HCT116 (cell line): ENCODE measurements at regions of chr9 and their contacts with region 1.

Region 1: DNA sequence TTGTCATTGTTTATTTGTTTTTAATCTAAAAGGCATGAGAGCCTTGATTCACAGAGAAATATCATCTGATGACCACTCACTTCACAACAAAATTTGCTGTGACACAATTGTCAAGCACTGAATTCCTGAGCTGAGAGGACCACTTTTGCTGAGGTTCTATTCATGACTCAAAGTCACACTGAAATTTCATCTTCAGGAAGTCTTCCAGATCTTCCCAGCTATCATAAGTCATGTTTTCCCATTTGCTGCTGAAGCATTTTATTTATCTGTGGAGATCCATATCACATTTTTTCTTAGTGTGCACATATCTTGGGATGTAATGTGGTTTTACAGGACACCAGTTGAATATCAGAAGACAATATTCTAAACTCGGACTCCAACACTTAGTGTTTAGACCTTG is 255.1 kb upstream of the TRIM32 start:
- DNase-seq: no peak
- ATAC-seq: no peak
- H3K4me3 ChIP-seq: no peak overlapping the region
- H3K27ac ChIP-seq: no peak overlapping the region
- H3K4me1 ChIP-seq: no peaks in the 10 kb centered on the region
- H3K27me3 ChIP-seq: no peaks in the 10 kb centered on the region
- CTCF ChIP-seq: no peak
- POLR2A ChIP-seq: no peak
- RAD21 ChIP-seq: no peak

Region 2: GRCh38 chr9:115668506-115668905 is 763.5 kb before region 1 on chr9:
- CTCF ChIA-PET with region 1: no interaction called
- POLR2A ChIA-PET with region 1: no interaction called
- RAD21 ChIA-PET with region 1: no interaction called
- intact Hi-C with region 1: no loop called
- DNase-seq: no peak
- ATAC-seq: no peak
- H3K4me3 ChIP-seq: no peak overlapping the region
- H3K27ac ChIP-seq: no peak overlapping the region
- H3K4me1 ChIP-seq: no peaks in the 10 kb centered on the region; a peak in 1 of 4 replicates
- H3K27me3 ChIP-seq: peaks cover 39% of the 10 kb centered on the region
- CTCF ChIP-seq: no peak
- POLR2A ChIP-seq: no peak
- RAD21 ChIP-seq: no peak

Region 3: DNA sequence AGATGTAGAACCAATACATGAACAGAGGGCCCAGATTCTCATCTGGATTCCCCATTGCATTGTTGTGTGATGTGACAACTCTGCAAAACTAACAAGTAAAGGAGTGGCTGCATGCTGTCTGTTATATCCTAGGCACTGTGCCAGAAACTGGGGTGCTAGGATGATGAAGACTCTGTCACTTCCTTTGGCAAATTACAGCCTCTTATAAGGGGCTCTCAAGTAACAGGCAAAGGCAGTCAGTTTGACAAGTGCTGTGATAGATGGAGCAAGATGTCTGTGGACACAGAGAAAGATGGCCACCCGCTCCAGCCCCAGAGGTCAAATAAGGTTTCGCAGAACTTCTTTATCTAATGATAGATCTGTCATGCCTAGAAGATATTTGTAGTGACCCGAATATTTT is 162.8 kb before region 1 on chr9:
- CTCF ChIA-PET with region 1: no interaction called
- POLR2A ChIA-PET with region 1: no interaction called
- RAD21 ChIA-PET with region 1: no interaction called
- intact Hi-C with region 1: no loop called
- DNase-seq: no peak
- ATAC-seq: no peak
- H3K4me3 ChIP-seq: no peak overlapping the region
- H3K27ac ChIP-seq: no peak overlapping the region
- H3K4me1 ChIP-seq: no peaks in the 10 kb centered on the region
- H3K27me3 ChIP-seq: peaks cover 32% of the 10 kb centered on the region
- CTCF ChIP-seq: no peak
- POLR2A ChIP-seq: no peak
- RAD21 ChIP-seq: no peak

Region 4: DNA sequence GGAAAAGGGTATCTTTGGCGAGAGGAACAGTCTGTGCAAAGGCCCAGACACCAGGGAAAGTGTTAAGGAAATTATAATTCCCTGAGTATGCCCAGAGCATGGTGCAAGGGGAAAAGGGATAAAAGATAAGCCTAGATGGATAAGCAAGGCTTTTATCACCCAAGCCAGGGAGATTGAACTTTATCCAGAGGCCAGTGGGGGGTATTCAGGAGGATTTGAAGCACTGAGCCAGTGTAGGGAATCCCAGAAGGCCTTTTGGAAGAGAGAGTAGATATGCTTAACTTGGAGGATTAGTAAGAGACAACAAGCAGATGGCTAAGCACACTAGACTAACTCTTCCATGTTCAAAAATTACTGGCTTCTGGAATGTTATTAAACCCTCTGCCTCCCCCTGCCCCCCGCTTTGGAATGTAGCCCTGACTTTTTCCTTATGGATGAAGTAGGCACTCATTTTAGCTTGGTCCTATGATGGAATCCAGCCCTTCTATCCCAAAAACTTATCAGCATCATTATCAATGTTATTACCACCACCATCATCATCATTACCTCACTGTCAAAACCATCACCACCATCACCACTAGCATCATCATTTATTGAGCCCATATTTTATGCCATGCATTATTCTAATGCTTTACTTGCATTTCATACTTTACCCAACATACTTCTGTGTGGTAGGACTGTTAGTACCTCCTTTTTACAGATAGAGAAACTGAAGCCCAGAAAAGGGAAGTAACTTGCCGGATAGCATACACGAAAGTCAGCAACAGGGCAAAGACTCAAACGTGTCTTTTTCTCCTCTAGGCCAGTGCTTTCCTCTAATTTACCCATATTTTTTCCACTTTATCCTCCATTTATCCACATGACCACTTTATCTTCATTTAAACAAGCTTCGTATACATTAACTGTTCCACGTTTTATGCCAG is 41.5 kb before region 1 on chr9:
- CTCF ChIA-PET with region 1: no interaction called
- POLR2A ChIA-PET with region 1: no interaction called
- RAD21 ChIA-PET with region 1: no interaction called
- intact Hi-C with region 1: no loop called
- DNase-seq: no peak
- ATAC-seq: no peak
- H3K4me3 ChIP-seq: no peak overlapping the region
- H3K27ac ChIP-seq: no peak overlapping the region
- H3K4me1 ChIP-seq: no peaks in the 10 kb centered on the region
- H3K27me3 ChIP-seq: no peaks in the 10 kb centered on the region
- CTCF ChIP-seq: no peak
- POLR2A ChIP-seq: no peak
- RAD21 ChIP-seq: no peak

Region 5: DNA sequence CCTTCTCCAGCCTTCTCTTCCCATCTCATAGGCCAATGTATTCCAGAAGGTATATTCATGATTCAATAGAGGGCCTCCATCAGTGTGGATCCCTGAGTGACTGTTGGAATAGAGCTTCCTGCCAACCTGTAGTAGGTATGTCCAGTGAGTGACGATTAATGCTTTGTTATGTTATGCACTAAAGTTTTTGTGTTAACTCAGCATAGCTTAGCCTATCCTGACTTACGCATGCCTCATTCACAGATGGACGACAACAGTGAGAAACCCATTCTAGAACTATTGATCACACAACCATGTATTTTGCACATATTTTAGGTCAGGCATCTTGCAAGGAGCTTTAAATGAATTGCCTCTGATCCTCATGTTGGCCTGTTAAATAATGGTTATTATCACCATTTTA is 29.6 kb after region 1 on chr9:
- CTCF ChIA-PET with region 1: no interaction called
- POLR2A ChIA-PET with region 1: no interaction called
- RAD21 ChIA-PET with region 1: no interaction called
- intact Hi-C with region 1: loop called (anchors 1 kb)
- DNase-seq: no peak
- ATAC-seq: no peak
- H3K4me3 ChIP-seq: no peak overlapping the region
- H3K27ac ChIP-seq: no peak overlapping the region
- H3K4me1 ChIP-seq: no peaks in the 10 kb centered on the region
- H3K27me3 ChIP-seq: no peaks in the 10 kb centered on the region; the same call in 1 of the 2 replicates
- CTCF ChIP-seq: no peak
- POLR2A ChIP-seq: no peak
- RAD21 ChIP-seq: no peak

Region 6: GRCh38 chr9:116987721-116988485 is 555.9 kb after region 1 on chr9:
- CTCF ChIA-PET with region 1: no interaction called
- POLR2A ChIA-PET with region 1: no interaction called
- RAD21 ChIA-PET with region 1: no interaction called
- intact Hi-C with region 1: no loop called
- DNase-seq: no peak
- ATAC-seq: no peak
- H3K4me3 ChIP-seq: no peak overlapping the region
- H3K27ac ChIP-seq: no peak overlapping the region
- H3K4me1 ChIP-seq: no peaks in the 10 kb centered on the region
- H3K27me3 ChIP-seq: no peaks in the 10 kb centered on the region
- CTCF ChIP-seq: no peak
- POLR2A ChIP-seq: no peak
- RAD21 ChIP-seq: no peak